ENCODE measurements at regions of chr11 and their contacts with region 1.

Region 1: GRCh38 chr11:46392421-46393230 is 1.1 kb upstream of the CHRM4 start:
- DNase-seq: peak; percentile 41 to 87
- H3K4me3 ChIP-seq: peak overlapping the region; percentile 28 to 76 (median 50)
- H3K27ac ChIP-seq: no peak overlapping the region
- H3K4me1 ChIP-seq: peaks cover 20 to 29% of the 10 kb centered on the region in 2 donors
- H3K27me3 ChIP-seq: peaks cover 20 to 44% of the 10 kb centered on the region in 2 donors
- CTCF ChIP-seq: no peak
- POLR2A ChIP-seq: no peak

Region 2: DNA sequence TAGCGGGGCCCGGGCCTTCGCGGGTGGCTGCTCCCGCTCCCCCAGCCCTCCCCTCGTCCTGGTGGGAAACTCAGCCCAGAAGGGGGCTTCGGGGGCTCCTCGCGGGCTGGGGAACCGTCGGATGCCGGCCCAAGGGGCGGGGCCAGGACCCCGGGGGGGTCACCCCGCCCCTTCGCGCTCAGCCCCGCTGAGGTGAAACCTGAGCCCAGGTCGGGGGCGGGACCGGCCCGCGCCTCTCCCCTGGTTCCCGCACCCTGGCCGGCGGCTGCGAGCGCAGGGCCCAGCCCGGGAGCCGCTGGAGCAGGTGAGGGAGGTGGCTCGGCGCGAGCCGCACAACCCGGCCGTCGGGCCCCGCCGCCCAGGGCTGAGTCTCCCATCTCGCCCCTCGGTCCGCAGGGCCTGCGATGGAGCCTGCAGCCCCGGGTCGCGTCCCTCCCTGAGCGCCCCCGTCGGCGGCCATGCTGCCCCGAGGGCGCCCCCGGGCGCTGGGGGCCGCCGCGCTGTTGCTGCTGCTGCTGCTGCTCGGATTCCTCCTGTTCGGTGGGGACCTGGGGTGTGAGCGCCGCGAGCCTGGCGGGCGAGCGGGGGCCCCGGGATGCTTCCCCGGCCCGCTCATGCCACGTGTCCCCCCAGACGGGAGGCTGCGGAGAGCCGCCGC is 470.1 kb before region 1 on chr11 and contains the start of gene LARGE2:
- intact Hi-C with region 1: no loop called
- DNase-seq: peak; percentile 50 to 61
- H3K4me3 ChIP-seq: peak within 1 kb of the TSS; percentile 13 to 79 (median 67)
- H3K27ac ChIP-seq: peak within 1 kb of the TSS; percentile 83 to 88
- H3K4me1 ChIP-seq: peaks cover 0 to 14% of the 10 kb centered on the region in 2 donors
- H3K27me3 ChIP-seq: no peaks in the 10 kb centered on the region
- CTCF ChIP-seq: no peak
- POLR2A ChIP-seq: no peak
- total RNA-seq, gene LARGE2: 5.9 to 6.3 TPM in 2 of 3 donors, not detected in the other

Region 3: GRCh38 chr11:46144741-46145140 is 247.9 kb before region 1 on chr11:
- intact Hi-C with region 1: loop called (anchors 5 kb)
- DNase-seq: no peak
- H3K4me3 ChIP-seq: no peak overlapping the region
- H3K27ac ChIP-seq: no peak overlapping the region
- H3K4me1 ChIP-seq: no peaks in the 10 kb centered on the region
- H3K27me3 ChIP-seq: no peaks in the 10 kb centered on the region
- CTCF ChIP-seq: no peak
- POLR2A ChIP-seq: no peak

Region 4: GRCh38 chr11:46170797-46171196 is 221.8 kb before region 1 on chr11:
- intact Hi-C with region 1: no loop called
- DNase-seq: no peak
- H3K4me3 ChIP-seq: no peak overlapping the region
- H3K27ac ChIP-seq: no peak overlapping the region
- H3K4me1 ChIP-seq: no peaks in the 10 kb centered on the region
- H3K27me3 ChIP-seq: no peaks in the 10 kb centered on the region
- CTCF ChIP-seq: no peak
- POLR2A ChIP-seq: no peak

Region 5: DNA sequence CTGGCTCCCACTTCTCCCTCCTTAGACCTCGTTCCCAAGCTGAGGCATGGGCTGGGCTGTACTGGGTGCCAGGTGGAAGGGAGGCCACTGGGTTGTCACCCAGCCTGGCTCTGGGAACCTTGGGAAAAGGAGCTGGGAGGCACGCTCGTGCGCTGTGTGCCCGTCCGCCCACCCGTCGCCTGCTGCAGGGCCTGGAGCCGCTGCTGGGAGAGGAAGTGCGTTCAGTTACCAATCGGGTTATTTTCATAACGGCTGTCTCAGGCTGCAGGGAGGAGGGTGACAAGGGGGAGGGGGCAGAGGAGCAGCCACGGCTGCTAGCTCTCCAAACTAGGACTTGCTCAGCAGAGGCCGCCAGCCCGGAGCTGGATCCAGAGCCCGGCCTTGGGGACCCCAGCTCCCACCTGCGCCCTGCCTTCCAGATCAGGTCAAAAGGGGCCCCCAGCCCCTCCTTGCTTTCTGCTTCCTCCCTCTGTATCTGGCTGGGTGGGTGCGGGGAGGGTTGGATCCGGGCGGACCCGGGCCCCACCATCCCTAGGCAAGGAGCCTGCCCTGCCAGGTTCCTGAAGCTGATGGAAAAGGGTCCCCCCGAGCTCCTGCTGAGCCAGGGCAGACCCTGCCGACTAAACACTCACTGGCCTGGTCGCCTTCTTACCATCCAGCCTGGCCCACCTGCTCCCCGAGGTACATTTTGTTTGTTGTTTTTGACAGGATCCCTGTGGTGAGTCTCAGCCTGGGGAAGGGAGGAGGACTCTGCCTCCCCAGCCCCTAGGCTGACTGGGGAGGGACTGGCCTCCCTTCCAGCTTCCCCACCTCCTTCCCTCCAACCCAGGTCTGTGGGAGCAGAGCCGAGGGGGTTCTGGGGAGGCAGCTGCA is 31.1 kb before region 1 on chr11:
- intact Hi-C with region 1: no loop called
- DNase-seq: peak in 1 of 2 donors; percentile 49
- H3K4me3 ChIP-seq: peak overlapping the region; percentile 30 to 61 (median 30)
- H3K27ac ChIP-seq: peak overlapping the region; percentile 90 to 98
- H3K4me1 ChIP-seq: peaks cover 19 to 29% of the 10 kb centered on the region in 2 donors
- H3K27me3 ChIP-seq: no peaks in the 10 kb centered on the region
- CTCF ChIP-seq: no peak
- POLR2A ChIP-seq: no peak

Region 6: GRCh38 chr11:46472670-46472994 is 80.0 kb after region 1 on chr11:
- intact Hi-C with region 1: no loop called
- DNase-seq: no peak
- H3K4me3 ChIP-seq: no peak overlapping the region
- H3K27ac ChIP-seq: no peak overlapping the region
- H3K4me1 ChIP-seq: no peaks in the 10 kb centered on the region
- H3K27me3 ChIP-seq: no peaks in the 10 kb centered on the region
- CTCF ChIP-seq: no peak
- POLR2A ChIP-seq: no peak

Region 7: DNA sequence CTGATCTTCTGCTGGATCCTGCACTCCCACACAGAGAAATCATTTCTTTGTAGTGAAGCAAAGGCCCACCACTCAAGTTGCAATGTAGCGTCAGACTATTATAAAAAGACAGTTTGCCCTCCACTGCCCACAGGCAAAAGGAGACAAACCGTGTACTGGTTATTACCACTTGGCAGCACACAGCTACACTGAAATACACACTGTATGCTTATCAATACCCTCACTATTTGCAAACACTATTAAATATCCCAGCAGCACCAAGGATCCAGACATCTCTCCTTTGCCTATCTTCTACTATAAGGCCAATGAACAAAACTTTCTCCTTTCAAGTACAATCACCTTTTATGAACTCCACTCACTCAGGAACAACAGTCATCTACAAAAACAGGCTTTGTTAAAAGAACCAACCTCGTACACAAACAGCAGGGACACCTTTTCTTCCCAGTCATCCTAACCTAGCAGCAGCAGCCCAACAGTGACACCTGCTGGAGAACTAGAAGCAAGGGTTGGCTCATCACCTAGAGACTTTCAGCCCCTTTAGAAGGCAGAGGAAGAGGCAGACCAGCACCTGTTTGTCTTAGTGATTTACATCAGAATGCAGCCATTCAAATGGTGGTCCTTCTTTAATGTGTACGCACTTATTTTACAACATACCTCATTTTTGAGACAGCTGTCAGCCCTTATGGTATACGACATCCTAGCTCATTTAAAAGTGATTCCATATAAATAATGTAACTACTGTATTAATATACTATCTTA is 145.1 kb after region 1 on chr11:
- intact Hi-C with region 1: loop called (anchors 10 kb)
- DNase-seq: peak in 1 of 2 donors; percentile 49
- H3K4me3 ChIP-seq: no peak overlapping the region
- H3K27ac ChIP-seq: no peak overlapping the region
- H3K4me1 ChIP-seq: peaks cover 0 to 5% of the 10 kb centered on the region in 2 donors
- H3K27me3 ChIP-seq: no peaks in the 10 kb centered on the region
- CTCF ChIP-seq: peak; percentile 49 to 90 (median 84)
- POLR2A ChIP-seq: no peak

Region 8: DNA sequence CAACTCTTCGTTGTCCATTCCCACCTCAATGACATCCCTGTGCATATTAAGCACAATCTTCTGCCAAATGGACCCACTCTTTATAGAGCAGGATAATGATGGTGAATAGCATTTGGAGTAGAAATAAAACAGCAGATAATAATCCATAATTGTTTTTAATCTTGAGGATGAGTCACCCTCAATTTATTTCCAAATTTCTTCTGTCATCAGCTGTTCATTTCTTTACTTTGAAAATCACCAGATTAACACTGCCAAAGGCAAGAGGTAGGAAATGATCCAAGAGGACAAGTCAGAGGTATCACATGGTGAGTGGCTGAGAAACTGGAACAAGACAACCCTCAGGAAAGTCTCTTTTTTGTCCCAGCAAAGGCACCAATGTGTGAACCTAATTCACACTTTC is 208.5 kb after region 1 on chr11:
- intact Hi-C with region 1: loop called (anchors 10 kb)
- DNase-seq: no peak
- H3K4me3 ChIP-seq: no peak overlapping the region
- H3K27ac ChIP-seq: peak overlapping the region; percentile 78 to 80
- H3K4me1 ChIP-seq: peaks cover 0 to 7% of the 10 kb centered on the region in 2 donors
- H3K27me3 ChIP-seq: no peaks in the 10 kb centered on the region
- CTCF ChIP-seq: no peak
- POLR2A ChIP-seq: no peak